Common myeloid progenitor, CD34-positive (primary cell): ENCODE measurements at regions of chr16 and their contacts with region 1.

Region 1: DNA sequence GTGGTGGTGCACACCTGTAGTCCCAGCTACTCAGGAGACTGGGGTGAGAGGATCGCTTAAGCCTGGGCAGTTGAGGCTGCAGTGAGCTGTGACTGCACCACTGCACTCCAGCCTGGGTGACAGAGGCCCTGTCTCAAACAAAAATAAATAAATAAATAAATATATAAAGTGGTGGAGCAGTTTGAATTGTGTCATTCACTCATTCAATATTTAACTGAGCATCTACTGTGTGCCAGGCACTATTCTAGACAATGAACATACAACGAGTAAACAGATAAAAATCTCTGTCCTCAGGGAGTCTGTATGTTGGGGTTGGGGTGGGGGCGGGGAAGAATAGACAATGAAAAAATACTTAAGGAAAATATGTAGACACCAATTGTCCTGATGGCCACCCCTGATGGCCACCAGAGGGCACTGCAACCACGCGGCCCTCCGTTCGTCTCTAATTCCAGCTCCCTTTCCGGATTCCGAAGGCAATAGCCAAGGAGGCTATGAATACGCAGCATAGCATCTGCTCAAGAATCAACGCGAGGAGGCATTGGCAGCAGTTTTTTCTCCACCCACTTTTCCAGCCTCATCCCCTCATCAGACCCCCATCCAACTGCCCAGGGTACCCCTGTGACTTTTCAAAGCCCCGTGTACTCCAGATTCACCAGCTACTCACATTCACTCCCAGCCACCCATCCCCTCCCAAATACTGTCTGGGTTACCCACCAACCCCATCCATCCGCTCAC is 21.4 kb downstream of the QPRT start:
- DNase-seq: peak; percentile 85 to 90 (median 87)
- H3K4me3 ChIP-seq: peak overlapping the region in 1 of 7 experiments; percentile 7
- H3K27ac ChIP-seq: no peak overlapping the region
- H3K4me1 ChIP-seq: peaks cover 0 to 21% (median 14%) of the 10 kb centered on the region in 4 experiments
- H3K27me3 ChIP-seq: peaks cover 0 to 9% (median 0%) of the 10 kb centered on the region in 5 experiments

Region 2: GRCh38 chr16:29645694-29646187 is 54.7 kb before region 1 on chr16:
- CTCF ChIA-PET with region 1: interaction called, 20 read pairs
- POLR2A ChIA-PET with region 1: no interaction called
- DNase-seq: peak; percentile 71 to 85 (median 82)
- H3K4me3 ChIP-seq: peak overlapping the region in 2 of 7 experiments; percentile 3 to 11
- H3K27ac ChIP-seq: peak overlapping the region in 1 of 2 experiments; percentile 65
- H3K4me1 ChIP-seq: peaks cover 9 to 58% (median 38%) of the 10 kb centered on the region in 4 experiments
- H3K27me3 ChIP-seq: no peaks in the 10 kb centered on the region

Region 3: GRCh38 chr16:29714396-29714795 is 14.0 kb after region 1 on chr16:
- CTCF ChIA-PET with region 1: interaction called, 10 read pairs
- POLR2A ChIA-PET with region 1: interaction called, 3 read pairs
- DNase-seq: no peak
- H3K4me3 ChIP-seq: no peak overlapping the region
- H3K27ac ChIP-seq: no peak overlapping the region
- H3K4me1 ChIP-seq: peaks cover 0 to 3% (median under 1%) of the 10 kb centered on the region in 4 experiments
- H3K27me3 ChIP-seq: peaks cover 0 to under 1% (median 0%) of the 10 kb centered on the region in 5 experiments

Region 4: DNA sequence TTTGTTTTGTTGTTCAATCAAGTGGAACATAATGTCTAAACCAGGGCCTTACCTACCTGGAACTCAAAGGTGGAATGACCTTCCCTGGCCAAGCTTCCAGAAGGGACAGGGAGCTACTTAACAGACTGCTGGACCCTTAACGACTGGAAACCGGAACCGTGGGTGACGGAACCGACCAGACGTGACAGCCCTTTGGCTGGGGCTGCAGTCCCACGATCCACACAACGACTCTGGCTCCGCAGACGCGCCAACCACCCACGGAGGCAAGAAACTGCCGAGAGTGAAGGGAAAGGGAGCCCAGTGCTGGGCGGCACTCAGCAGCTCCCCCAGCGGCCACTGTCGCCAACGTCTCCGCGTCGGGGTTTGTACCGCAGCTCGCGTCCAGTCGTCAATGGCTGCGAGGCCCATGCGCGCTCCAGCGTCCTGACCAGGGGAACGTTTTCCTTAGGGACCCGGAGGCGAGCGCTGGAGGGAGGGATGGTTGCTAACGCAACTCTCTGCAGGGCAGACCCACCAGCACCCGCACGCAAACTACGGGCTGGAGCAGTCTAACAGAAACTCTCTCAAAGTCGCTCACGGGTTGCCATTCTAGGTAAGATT is 84.6 kb after region 1 on chr16:
- CTCF ChIA-PET with region 1: interaction called, 20 read pairs
- POLR2A ChIA-PET with region 1: interaction called, 3 read pairs
- DNase-seq: peak; percentile 46 to 65 (median 64)
- H3K4me3 ChIP-seq: peak overlapping the region in 3 of 7 experiments; percentile 35 to 48 (median 39)
- H3K27ac ChIP-seq: no peak overlapping the region
- H3K4me1 ChIP-seq: peaks cover 1 to 16% (median 8%) of the 10 kb centered on the region in 4 experiments
- H3K27me3 ChIP-seq: no peaks in the 10 kb centered on the region

Region 5: DNA sequence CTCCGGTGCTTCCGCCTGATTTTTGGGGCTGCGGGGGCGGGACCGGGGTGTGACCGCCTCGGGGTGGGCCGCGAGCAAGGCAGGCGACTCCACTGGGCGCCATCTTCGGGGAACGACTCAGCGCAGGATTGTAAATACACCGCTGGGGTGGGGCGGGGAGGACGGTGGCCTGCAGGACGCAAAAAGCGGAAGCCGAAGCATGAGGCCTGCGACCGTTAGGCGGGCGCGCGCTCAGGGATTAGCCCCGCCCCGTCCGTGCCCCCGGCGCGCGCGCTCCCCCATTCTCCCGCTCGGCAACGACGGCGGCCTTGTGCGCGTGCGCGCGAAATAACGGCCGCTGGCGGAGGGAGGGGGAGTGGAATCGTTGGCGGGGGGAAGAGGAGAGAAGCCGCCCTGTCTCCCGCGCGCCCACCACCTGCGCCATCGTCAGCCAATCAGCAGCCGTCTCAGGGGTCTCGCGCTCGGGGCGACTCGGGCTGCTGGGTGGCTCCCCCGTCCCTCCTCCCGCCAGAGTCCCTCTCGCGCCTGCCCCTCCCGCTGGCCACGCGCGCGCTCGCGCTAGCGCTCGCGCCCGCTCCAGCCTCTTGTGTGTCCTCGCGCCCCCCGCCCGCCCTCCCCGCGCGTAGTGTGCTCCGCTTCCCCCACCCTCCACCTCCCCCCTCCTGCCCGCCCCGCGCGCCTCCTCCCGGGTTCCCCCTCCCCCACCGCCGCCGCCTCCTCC is 105.1 kb after region 1 on chr16:
- CTCF ChIA-PET with region 1: interaction called, 15 read pairs
- POLR2A ChIA-PET with region 1: no interaction called
- DNase-seq: peak; percentile 98 to 100 (median 99)
- H3K4me3 ChIP-seq: peak overlapping the region; percentile 62 to 94 (median 79)
- H3K27ac ChIP-seq: peak overlapping the region; percentile 83 to 94
- H3K4me1 ChIP-seq: peaks cover 8 to 52% (median 42%) of the 10 kb centered on the region in 4 experiments
- H3K27me3 ChIP-seq: no peaks in the 10 kb centered on the region

Region 6: DNA sequence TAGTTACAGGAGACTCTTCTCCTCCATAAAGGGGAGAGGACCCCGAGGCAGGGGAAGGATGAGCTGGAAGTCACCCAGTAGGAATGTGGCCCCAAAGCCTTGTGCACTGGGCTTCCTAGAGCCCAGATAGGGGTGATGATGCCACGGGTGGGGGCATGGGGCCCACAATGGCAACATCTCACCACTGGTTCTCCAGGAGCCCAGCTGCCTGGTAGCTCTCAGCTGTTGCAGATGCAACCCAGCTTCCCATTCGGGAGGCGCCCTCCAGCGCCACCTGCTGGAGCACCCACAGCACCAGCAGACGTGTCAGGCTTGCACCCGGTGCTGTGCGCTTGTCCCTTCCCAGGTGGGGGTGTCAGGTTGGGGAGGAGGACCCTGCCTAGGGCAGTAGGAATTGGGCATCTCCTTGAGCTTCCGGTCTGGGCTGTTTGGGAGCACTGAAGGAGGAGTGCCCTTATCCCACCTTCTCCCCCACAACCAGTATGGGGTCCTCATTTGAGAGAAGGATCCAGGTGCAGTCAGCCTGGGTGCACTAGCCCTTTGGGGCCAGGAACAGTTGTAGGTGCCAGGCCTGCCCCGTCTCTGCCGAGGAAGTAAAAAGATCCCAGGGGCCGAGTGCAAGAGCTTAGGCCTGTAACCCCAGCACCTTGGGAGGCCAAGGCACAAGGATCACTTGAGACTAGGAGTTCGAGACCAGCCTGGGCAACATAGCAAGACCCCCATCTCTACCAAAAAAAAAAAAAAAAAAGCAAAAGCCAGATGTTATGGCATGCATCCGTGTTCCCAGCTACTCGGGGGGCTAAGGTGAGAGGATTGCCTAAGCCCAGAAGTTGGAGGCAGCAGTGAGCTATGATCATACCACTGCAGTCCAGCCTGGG is 148.2 kb after region 1 on chr16:
- CTCF ChIA-PET with region 1: interaction called, 11 read pairs
- POLR2A ChIA-PET with region 1: no interaction called
- DNase-seq: peak; percentile 61 to 78 (median 75)
- H3K4me3 ChIP-seq: no peak overlapping the region
- H3K27ac ChIP-seq: no peak overlapping the region
- H3K4me1 ChIP-seq: no peaks in the 10 kb centered on the region
- H3K27me3 ChIP-seq: no peaks in the 10 kb centered on the region